Activated B cell treated with CpG ODN at 0.5 μM for 24 hours (primary cell): ENCODE measurements at regions of chr11 and their contacts with region 1.

Region 1: GRCh38 chr11:2498750-2499149 is 53.9 kb downstream of the KCNQ1 start:
- DNase-seq: no peak
- ATAC-seq: no peak
- H3K4me3 Mint-ChIP-seq: no peak overlapping the region
- H3K27ac Mint-ChIP-seq: no peak overlapping the region
- H3K4me1 Mint-ChIP-seq: peaks cover 3% of the 10 kb centered on the region
- H3K27me3 Mint-ChIP-seq: no peaks in the 10 kb centered on the region
- CTCF ChIP-seq: no peak

Region 2: GRCh38 chr11:2775083-2775625 is 276.4 kb after region 1 on chr11:
- CTCF ChIA-PET with region 1: no interaction called
- POLR2A ChIA-PET with region 1: interaction called, 13 read pairs
- intact Hi-C with region 1: no loop called
- DNase-seq: no peak
- ATAC-seq: no peak
- H3K4me3 Mint-ChIP-seq: no peak overlapping the region
- H3K27ac Mint-ChIP-seq: no peak overlapping the region
- H3K4me1 Mint-ChIP-seq: no peaks in the 10 kb centered on the region
- H3K27me3 Mint-ChIP-seq: no peaks in the 10 kb centered on the region
- CTCF ChIP-seq: no peak